ENCODE measurements at regions of chr3 and their contacts with region 1.

Region 1: DNA sequence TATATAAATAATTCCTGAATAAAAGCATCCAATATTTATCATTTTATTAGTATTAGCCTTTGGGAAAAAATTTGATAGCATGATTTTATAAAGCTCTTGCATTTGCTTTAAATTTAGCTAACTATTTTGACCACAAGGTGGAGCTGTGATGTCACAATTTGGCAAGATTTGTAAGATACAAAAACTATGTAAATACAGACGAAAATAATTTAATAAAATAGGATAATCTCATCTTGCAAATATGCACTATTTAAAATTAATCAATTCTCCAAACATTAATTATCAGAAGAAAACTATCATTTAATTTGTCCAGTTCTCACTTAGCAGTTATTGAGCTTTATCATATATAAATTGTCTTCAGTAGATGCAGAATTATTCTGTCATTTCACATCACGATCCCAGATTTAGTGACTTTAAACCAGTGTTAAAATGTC is 95.4 kb downstream of the PLOD2 start:
- DNase-seq: no peak

Region 2: DNA sequence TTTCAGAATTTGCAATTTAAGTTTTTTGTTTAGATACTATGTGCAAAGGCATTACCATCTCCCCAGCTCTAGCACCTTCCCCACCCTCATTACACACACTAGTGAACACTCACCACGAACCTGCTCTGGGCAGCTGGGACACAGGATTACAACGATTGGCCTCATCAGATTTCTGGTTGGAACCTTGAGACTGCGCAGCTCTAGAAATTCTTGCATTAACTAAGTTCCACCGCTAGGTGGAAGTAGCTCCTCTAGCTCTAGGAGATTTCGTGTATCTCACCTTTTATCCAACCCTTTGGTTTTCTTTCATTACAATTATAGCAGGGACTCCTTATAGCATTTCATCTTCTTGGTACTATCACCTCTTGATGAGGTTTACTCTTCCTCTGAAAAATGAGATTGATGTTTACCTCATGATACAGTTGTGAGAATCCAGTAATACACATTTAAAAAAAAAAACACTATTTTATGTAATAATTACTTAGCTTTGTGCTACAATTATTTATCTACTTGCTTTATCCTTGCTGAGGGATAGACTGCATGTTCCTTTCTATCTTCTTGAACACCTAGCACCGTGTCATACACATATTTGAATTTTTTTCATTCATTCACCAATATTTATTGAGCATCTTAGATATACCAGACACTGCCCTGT is 124.1 kb after region 1 on chr3:
- intact Hi-C with region 1: loop called (anchors 1 kb)
- DNase-seq: peak in 2 of 10 donors; percentile 4 to 10

Measured in posterior cingulate gyrus (tissue), 11 donors.